Psoas muscle (tissue), 8 donors: ENCODE measurements at regions of chr16 and their contacts with region 1.

Region 1: GRCh38 chr16:18816286-18816685 is 14.9 kb upstream of the ARL6IP1 start:
- DNase-seq: no peak
- ATAC-seq: no peak
- H3K4me3 ChIP-seq: no peak overlapping the region
- H3K27ac ChIP-seq: peak overlapping the region; percentile 59
- H3K4me1 ChIP-seq: peaks cover 32% of the 10 kb centered on the region
- H3K27me3 ChIP-seq: no peaks in the 10 kb centered on the region
- CTCF ChIP-seq: no peak

Region 2: GRCh38 chr16:18833707-18834500 is 17.6 kb after region 1 on chr16:
- intact Hi-C with region 1: loop called in 1 of 2 experiments (anchors 1 kb)
- DNase-seq: no peak
- ATAC-seq: no peak
- H3K4me3 ChIP-seq: no peak overlapping the region
- H3K27ac ChIP-seq: no peak overlapping the region
- H3K4me1 ChIP-seq: no peaks in the 10 kb centered on the region
- H3K27me3 ChIP-seq: no peaks in the 10 kb centered on the region
- CTCF ChIP-seq: no peak

Region 3: DNA sequence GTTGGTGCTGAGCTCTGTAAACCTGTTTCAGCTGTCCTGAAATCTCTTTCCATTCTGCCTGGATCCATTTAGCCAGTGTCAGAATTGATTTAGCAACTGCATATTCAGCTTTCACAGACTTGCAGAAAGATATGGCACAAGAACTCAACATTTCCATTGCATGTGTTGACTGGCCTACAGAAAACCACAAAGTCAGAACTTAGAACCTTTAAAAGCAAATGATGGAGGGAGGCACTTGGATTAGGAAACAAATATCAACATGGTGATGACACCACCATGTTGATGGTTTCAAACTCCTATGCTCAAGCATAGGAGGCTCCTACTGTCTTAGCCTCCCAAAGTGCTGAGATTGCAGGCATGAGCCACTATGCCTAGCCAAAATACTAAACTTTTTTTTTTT is 37.4 kb after region 1 on chr16:
- intact Hi-C with region 1: loop called in 1 of 2 experiments (anchors 5 kb)
- DNase-seq: no peak
- ATAC-seq: peak in 3 of 4 donors; percentile 16 to 57 (median 25)
- H3K4me3 ChIP-seq: no peak overlapping the region
- H3K27ac ChIP-seq: no peak overlapping the region
- H3K4me1 ChIP-seq: no peaks in the 10 kb centered on the region
- H3K27me3 ChIP-seq: no peaks in the 10 kb centered on the region
- CTCF ChIP-seq: no peak

Region 4: DNA sequence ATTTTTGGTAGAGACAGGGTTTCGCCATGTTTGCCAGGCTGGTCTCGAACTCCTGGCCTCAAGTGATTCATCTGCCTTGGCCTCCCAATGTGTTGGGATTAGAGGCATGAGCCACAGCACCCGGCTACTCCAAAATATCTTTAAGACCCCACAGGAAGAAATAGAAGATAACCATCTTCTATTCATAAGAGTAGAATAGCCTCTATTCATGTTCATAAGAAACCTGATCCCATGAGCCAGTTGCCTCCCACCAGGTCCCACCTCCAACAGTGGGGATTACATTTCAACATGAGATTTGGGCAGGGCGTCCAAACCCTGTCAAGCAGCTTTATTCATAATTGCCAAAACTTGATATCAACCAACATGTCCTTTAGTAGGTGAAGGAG is 153.6 kb after region 1 on chr16:
- intact Hi-C with region 1: no loop called
- DNase-seq: no peak
- ATAC-seq: no peak
- H3K4me3 ChIP-seq: no peak overlapping the region
- H3K27ac ChIP-seq: no peak overlapping the region
- H3K4me1 ChIP-seq: peaks cover 8% of the 10 kb centered on the region
- H3K27me3 ChIP-seq: no peaks in the 10 kb centered on the region
- CTCF ChIP-seq: no peak